ENCODE measurements at regions of chr7 and their contacts with region 1.

Region 1: GRCh38 chr7:19747740-19748339 is 25.6 kb downstream of the TMEM196 start:
- DNase-seq: no peak
- H3K4me3 ChIP-seq: no peak overlapping the region
- H3K27ac ChIP-seq: no peak overlapping the region
- H3K27me3 ChIP-seq: no peaks in the 10 kb centered on the region
- CTCF ChIP-seq: peak; percentile 62

Region 2: DNA sequence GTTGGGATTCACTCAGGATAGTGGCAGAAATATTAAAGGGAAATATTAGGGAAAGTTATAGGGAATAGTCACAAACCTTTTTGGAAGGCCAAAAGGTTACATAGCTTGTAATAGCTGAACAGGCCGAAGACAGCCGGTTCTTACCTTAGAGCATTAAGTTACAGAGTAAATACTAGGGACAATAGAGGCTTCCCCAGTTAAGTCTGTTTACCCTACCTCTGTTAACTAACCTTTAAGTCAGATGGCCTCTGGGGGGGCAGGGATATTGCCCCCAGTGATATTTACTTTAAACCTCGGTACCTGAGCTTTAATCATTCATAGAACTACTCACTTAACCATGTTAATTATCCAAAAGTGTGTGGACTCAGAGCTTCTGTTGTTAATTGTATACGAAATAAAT is 46.4 kb before region 1 on chr7:
- CTCF ChIA-PET with region 1: no interaction called
- POLR2A ChIA-PET with region 1: no interaction called
- DNase-seq: no peak
- H3K4me3 ChIP-seq: no peak overlapping the region
- H3K27ac ChIP-seq: no peak overlapping the region
- H3K27me3 ChIP-seq: no peaks in the 10 kb centered on the region
- CTCF ChIP-seq: no peak

Region 3: DNA sequence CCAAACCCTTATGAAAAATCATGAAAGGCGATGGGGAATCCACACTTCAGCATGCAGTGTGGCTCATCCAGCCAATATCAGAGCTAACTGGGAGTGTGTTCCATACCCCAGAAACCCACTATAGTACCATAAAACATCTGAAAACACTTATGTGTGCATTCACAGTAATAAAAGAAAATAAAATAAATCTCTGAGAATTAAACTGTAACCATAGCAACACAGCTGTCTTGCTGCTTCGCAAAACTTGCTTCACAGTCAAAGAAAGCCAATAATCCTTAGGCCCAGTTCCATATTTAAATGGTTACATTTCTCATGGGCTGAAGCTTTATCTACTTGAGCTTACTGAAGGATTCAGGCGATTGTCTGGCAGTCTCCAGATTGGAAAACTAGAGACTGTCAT is 19.1 kb before region 1 on chr7:
- CTCF ChIA-PET with region 1: interaction called, 15 read pairs
- POLR2A ChIA-PET with region 1: no interaction called
- DNase-seq: no peak
- H3K4me3 ChIP-seq: no peak overlapping the region
- H3K27ac ChIP-seq: no peak overlapping the region
- H3K27me3 ChIP-seq: no peaks in the 10 kb centered on the region
- CTCF ChIP-seq: no peak